ENCODE measurements at regions of chr20 and their contacts with region 1.

Region 1: DNA sequence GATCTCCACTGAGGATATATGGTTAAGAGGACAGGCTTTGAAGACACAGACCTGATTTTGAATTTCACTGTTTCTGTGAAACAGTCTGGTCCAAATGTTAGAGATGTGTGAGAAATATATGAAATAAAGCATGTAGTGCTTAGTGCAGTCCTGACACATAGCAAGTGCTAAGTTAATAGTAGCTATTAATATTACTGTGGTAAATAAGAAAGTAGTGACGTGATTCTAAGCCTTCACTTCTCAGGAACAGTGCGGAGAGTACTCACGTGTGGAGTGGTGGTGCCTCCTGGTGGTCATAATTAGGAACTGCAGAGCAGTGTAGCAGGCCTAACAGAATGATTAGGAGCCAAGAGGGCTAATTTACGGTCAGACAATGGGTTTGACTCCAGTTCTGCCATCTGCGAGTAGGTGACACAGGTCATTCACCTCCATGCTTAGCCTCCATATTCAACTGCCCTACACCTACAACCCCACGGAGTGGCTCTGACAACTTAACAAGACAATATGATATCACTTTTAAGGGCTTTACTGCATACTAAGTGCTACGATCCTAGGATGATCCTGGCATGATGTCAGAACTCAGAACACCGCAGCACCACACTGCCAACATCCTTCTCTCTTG is 106.2 kb downstream of the JPH2 start:
- DNase-seq: no peak
- H3K4me3 ChIP-seq: no peak overlapping the region
- H3K27me3 ChIP-seq: no peaks in the 10 kb centered on the region
- CTCF ChIP-seq: peak; percentile 94

Region 2: GRCh38 chr20:43337036-43337435 is 743.7 kb before region 1 on chr20:
- CTCF ChIA-PET with region 1: no interaction called
- POLR2A ChIA-PET with region 1: no interaction called
- DNase-seq: no peak
- H3K4me3 ChIP-seq: no peak overlapping the region
- H3K27me3 ChIP-seq: no peaks in the 10 kb centered on the region
- CTCF ChIP-seq: no peak

Region 3: DNA sequence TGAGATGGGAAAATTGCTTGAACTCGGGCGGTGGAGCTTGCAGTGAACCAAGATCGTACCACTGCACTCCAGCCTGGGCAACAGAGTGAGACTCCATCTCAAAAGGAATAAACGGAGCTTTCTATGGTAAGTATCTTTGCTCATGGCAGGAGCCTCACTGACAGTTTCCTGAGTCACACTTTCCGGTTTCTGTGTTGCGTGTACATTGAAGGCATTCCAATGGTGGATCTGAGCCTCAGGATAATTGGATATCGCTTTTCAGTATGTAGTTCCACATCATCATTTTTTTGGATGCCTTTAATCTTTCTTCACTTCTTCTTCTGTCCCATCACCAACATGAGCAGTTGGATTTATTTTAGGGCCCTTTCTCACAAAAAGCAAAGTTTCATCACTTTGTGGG is 325.4 kb before region 1 on chr20:
- CTCF ChIA-PET with region 1: interaction called, 140 read pairs
- POLR2A ChIA-PET with region 1: interaction called, 3 read pairs
- DNase-seq: peak; percentile 30
- H3K4me3 ChIP-seq: no peak overlapping the region
- H3K27me3 ChIP-seq: no peaks in the 10 kb centered on the region
- CTCF ChIP-seq: no peak

Region 4: GRCh38 chr20:44092551-44093248 is 11.9 kb after region 1 on chr20:
- CTCF ChIA-PET with region 1: interaction called, 12 read pairs
- POLR2A ChIA-PET with region 1: no interaction called
- DNase-seq: no peak
- H3K4me3 ChIP-seq: no peak overlapping the region
- H3K27me3 ChIP-seq: no peaks in the 10 kb centered on the region
- CTCF ChIP-seq: peak; percentile 64